CD4-positive, alpha-beta T cell (primary cell): ENCODE measurements at regions of chr10 and their contacts with region 1.

Region 1: GRCh38 chr10:110497438-110498086 is at the start of gene DUSP5:
- DNase-seq: peak; percentile 89 to 98 (median 95)
- ATAC-seq: peak; percentile 83
- H3K4me3 ChIP-seq: peak within 1 kb of the TSS; percentile 80
- H3K4me3 Mint-ChIP-seq: peak within 1 kb of the TSS; percentile 96
- H3K27ac ChIP-seq: peak within 1 kb of the TSS; percentile 53 to 64
- H3K27ac Mint-ChIP-seq: peak within 1 kb of the TSS; percentile 84
- H3K4me1 ChIP-seq: peaks cover 62% of the 10 kb centered on the region
- H3K4me1 Mint-ChIP-seq: peaks cover 63% of the 10 kb centered on the region
- H3K27me3 ChIP-seq: no peaks in the 10 kb centered on the region
- H3K27me3 Mint-ChIP-seq: no peaks in the 10 kb centered on the region
- CTCF ChIP-seq: no peak
- total RNA-seq, gene DUSP5: 64.3 to 66.2 TPM

Region 2: DNA sequence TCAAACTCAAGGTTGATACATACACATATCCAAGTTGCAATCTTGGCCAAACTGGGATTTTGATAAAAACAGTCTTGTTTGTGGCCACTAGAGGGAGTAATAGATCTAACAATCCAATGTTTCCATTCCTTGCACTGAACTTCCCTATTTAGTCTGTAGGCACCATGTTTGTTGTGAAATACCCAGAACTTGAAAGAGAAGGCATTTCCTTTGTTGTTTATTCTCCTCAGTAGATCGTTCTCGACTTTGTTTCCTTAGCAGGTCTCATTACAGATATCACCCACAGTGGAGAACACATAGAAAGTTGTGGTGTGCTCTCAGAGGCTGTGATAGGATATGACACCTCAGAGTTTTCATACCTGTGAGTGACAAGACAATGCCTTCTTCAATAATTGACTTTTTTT is 360.4 kb before region 1 on chr10:
- CTCF ChIA-PET with region 1: no interaction called
- POLR2A ChIA-PET with region 1: no interaction called
- intact Hi-C with region 1: loop called in 1 of 2 experiments (anchors 5 kb)
- DNase-seq: peak in 3 of 14 experiments; percentile 74 to 79 (median 77)
- ATAC-seq: peak; percentile 74
- H3K4me3 ChIP-seq: no peak overlapping the region
- H3K4me3 Mint-ChIP-seq: no peak overlapping the region
- H3K27ac ChIP-seq: no peak overlapping the region
- H3K27ac Mint-ChIP-seq: peak overlapping the region; percentile 35
- H3K4me1 ChIP-seq: peaks cover 5% of the 10 kb centered on the region
- H3K4me1 Mint-ChIP-seq: peaks cover 31% of the 10 kb centered on the region
- H3K27me3 ChIP-seq: no peaks in the 10 kb centered on the region
- H3K27me3 Mint-ChIP-seq: no peaks in the 10 kb centered on the region
- CTCF ChIP-seq: peak; percentile 93

Region 3: DNA sequence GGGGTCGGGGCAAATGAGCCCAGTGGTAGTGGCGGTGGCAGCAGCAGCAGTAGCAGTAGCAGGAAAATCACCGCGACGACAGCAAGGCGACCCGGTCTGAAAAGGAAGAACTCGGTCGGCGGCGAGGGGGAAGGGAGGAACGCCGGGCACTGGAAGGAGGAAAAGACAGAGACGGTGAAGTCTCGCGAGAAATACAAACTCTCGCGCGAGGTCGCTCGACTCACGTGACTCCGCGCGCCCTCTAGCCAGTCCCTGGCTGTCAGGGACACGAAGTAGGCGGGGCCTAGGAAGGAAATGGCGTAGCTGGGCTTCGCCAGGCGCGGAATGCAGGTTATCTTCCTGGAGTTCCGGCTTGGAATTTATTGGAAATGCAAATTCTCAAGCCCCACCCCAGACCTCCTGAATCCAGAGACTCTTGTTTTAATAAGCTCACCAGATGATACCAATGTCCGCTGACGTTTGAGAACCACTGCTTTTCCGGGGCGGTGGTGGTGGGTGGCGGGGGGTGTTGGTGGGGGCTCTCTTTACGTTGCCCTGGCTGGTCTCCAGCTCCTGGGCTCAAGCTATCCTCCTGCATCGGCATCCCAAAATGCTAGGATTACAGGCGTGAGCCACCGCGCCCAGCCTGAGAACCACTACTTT is 192.7 kb before region 1 on chr10 and contains the start of gene SMNDC1:
- CTCF ChIA-PET with region 1: interaction called, 8 read pairs
- POLR2A ChIA-PET with region 1: interaction called, 30 read pairs
- intact Hi-C with region 1: loop called (anchors 2 kb)
- DNase-seq: peak; percentile 94 to 99 (median 96)
- ATAC-seq: peak; percentile 88
- H3K4me3 ChIP-seq: peak within 1 kb of the TSS; percentile 72
- H3K4me3 Mint-ChIP-seq: peak within 1 kb of the TSS; percentile 97
- H3K27ac ChIP-seq: peak within 1 kb of the TSS; percentile 74 to 90
- H3K27ac Mint-ChIP-seq: peak within 1 kb of the TSS; percentile 98
- H3K4me1 ChIP-seq: peaks cover 23% of the 10 kb centered on the region
- H3K4me1 Mint-ChIP-seq: peaks cover 61% of the 10 kb centered on the region
- H3K27me3 ChIP-seq: no peaks in the 10 kb centered on the region
- H3K27me3 Mint-ChIP-seq: no peaks in the 10 kb centered on the region
- CTCF ChIP-seq: no peak
- total RNA-seq, gene SMNDC1: 40.2 to 48.1 TPM

Region 4: GRCh38 chr10:110414563-110415309 is 82.8 kb before region 1 on chr10:
- CTCF ChIA-PET with region 1: interaction called, 3 read pairs
- POLR2A ChIA-PET with region 1: interaction called, 8 read pairs
- intact Hi-C with region 1: loop called (anchors 2 to 5 kb)
- DNase-seq: peak; percentile 60 to 96 (median 82)
- ATAC-seq: peak; percentile 95
- H3K4me3 ChIP-seq: no peak overlapping the region
- H3K4me3 Mint-ChIP-seq: peak overlapping the region; percentile 22
- H3K27ac ChIP-seq: peak overlapping the region in 1 of 2 donors; percentile 26
- H3K27ac Mint-ChIP-seq: peak overlapping the region; percentile 79
- H3K4me1 ChIP-seq: peaks cover 47% of the 10 kb centered on the region
- H3K4me1 Mint-ChIP-seq: peaks cover 20% of the 10 kb centered on the region
- H3K27me3 ChIP-seq: no peaks in the 10 kb centered on the region
- H3K27me3 Mint-ChIP-seq: no peaks in the 10 kb centered on the region
- CTCF ChIP-seq: no peak

Region 5: GRCh38 chr10:110525349-110526260 is 28.0 kb after region 1 on chr10:
- CTCF ChIA-PET with region 1: no interaction called
- POLR2A ChIA-PET with region 1: no interaction called
- intact Hi-C with region 1: no loop called
- DNase-seq: no peak
- ATAC-seq: no peak
- H3K4me3 ChIP-seq: no peak overlapping the region
- H3K4me3 Mint-ChIP-seq: no peak overlapping the region
- H3K27ac ChIP-seq: no peak overlapping the region
- H3K27ac Mint-ChIP-seq: no peak overlapping the region
- H3K4me1 ChIP-seq: peaks cover 25% of the 10 kb centered on the region
- H3K4me1 Mint-ChIP-seq: peaks cover 30% of the 10 kb centered on the region
- H3K27me3 ChIP-seq: no peaks in the 10 kb centered on the region
- H3K27me3 Mint-ChIP-seq: no peaks in the 10 kb centered on the region
- CTCF ChIP-seq: no peak

Region 6: DNA sequence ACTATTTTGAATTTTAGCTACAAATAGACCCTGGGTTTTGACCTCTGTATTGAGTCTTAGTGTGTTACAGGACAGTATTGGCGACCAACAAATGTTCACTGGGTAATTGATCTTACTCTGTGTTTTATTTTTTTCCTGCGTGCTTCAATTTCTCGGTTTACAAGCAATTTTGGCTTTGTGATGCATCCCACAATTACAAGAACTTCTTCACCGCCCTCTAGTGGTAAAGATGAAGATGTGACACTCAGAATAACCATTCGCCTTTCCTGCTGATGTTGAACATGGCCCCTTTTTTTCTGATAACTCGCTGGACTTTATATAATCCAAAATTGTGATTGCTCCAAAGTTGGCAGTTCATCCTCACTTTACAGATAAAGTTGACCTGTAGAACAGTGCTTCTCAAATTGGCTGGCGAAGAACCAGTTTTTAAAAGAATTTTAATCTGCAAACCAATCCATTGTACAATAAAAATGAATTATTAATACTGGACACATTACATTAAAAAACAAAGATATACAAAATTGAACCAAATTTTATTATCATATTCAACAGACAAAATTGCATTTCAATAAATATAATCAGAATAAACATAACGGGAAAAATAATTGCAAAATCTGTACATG is 49.7 kb after region 1 on chr10:
- CTCF ChIA-PET with region 1: interaction called, 4 read pairs
- POLR2A ChIA-PET with region 1: interaction called, 3 read pairs
- intact Hi-C with region 1: loop called in 1 of 2 experiments (anchors 5 kb)
- DNase-seq: peak in 3 of 14 experiments; percentile 77 to 79 (median 78)
- ATAC-seq: peak; percentile 80
- H3K4me3 ChIP-seq: no peak overlapping the region
- H3K4me3 Mint-ChIP-seq: no peak overlapping the region
- H3K27ac ChIP-seq: no peak overlapping the region
- H3K27ac Mint-ChIP-seq: no peak overlapping the region
- H3K4me1 ChIP-seq: no peaks in the 10 kb centered on the region
- H3K4me1 Mint-ChIP-seq: peaks cover 6% of the 10 kb centered on the region
- H3K27me3 ChIP-seq: peaks cover 0 to 10% of the 10 kb centered on the region in 2 experiments
- H3K27me3 Mint-ChIP-seq: peaks cover 21% of the 10 kb centered on the region
- CTCF ChIP-seq: peak; percentile 92